HEK293T (cell line): ENCODE measurements at regions of chrX and their contacts with region 1.

Region 1: DNA sequence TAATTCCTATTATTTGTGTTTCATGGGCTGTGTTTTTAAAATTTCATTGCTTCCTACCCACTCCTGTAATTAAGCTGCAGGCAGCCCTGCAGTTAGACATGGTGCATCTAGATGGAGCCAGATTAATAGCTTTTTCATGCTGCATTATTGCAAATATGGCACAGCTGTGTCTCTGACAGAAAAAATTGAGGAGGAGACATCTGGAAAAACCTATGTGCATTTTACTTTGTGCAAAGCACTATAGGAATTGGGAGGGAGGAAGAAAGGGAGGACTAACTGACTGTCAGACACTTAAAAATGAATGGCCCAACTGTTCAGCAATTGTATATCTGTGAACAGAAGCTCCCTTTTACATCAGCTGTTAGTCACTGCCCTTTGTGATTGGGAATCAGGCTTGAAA is 8.1 kb upstream of the RPGR start:
- DNase-seq: no peak

Region 2: DNA sequence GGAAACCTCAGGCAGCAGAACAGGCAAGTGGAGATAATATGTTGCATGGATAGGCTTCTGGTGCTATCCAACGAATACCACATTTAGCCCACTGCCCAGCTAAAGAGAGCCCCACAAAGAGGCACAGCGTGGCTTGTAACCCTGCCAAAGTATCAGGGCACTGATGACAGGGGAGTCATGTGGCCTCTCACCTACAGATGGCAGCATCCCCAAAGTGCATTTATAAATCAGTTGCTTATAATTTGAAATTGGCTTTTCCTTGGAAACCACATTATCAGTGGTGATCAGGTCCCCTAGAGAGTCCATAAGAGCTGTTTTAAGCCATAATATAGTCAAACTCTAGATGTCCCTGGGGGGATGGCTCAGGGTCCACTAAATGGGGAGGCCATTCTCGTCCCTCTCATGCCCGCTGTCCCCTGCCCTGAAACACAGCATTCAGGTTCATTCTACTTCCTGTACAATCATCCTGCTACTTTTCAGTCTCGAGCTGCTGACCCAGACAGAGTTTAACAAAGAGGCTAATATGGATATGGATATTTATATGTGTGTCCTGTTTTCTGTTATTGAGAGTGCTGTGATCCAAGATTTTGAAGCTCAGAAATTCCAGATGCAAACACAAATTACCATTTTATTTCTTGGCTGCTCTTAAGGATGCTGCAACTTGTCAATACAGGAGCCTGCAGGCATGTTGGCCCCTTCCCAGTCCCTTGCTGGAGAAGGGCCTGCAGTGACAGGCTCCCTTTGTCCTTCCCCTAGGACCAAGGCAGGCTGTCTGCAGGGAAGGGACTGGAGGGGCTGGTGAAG is 143.2 kb before region 1 on chrX:
- CTCF ChIA-PET with region 1: interaction called, 13 read pairs
- POLR2A ChIA-PET with region 1: no interaction called
- DNase-seq: peak; percentile 35